IMR-90 (cell line): ENCODE measurements at regions of chr17 and their contacts with region 1.

Region 1: DNA sequence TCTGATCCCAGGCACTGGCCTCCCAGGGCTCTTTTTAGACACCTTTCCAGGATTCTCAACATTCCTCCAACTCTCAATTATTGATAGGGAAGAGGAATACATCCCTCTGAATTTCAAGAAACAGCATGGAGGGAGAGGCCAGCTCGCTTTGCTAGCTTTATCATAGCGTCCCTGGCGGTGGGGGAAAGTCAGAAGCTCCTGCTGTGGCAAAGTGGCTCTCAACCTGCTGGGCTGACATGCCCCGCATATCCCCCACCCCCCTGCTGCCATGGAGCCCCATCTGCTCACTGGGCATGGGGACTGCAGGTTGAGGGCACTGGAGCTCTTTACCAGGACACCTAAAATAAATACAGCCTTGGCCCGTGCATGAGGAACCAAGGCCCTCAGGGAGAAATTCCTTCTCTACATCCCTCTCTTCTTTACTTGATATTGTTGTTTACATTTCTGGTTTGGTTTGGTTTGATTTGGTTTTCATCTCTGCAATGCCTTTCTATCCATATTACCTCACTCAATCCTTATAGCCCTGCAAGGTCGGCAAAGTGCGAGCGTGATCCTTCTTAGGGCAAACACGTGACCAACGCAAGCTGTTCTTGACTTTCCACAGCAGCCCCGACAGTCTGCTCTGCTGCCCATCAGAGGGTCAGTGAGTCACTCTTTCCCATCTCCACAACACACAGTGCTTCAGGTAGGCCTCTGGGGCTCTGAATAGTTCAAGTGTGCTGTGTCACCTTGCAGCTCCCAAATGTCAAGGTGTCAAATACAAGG is 140.1 kb downstream of the SLC39A11 start:
- DNase-seq: no peak
- ATAC-seq: peak; percentile 17; the same call in 1 of the 2 replicates
- H3K4me3 ChIP-seq: no peak overlapping the region
- H3K27ac ChIP-seq: no peak overlapping the region
- H3K4me1 ChIP-seq: no peaks in the 10 kb centered on the region
- H3K27me3 ChIP-seq: no peaks in the 10 kb centered on the region
- CTCF ChIP-seq: no peak
- POLR2A ChIP-seq: no peak
- RAD21 ChIP-seq: no peak

Region 2: GRCh38 chr17:71398800-71399219 is 1553.6 kb before region 1 on chr17:
- CTCF ChIA-PET with region 1: no interaction called
- POLR2A ChIA-PET with region 1: no interaction called
- dilution Hi-C with region 1: no loop called
- in situ Hi-C with region 1: no loop called
- intact Hi-C with region 1: no loop called
- DNase-seq: no peak
- ATAC-seq: peak; percentile 17; the same call in 1 of the 2 replicates
- H3K4me3 ChIP-seq: no peak overlapping the region
- H3K27ac ChIP-seq: no peak overlapping the region
- H3K4me1 ChIP-seq: peaks cover 2% of the 10 kb centered on the region; the same call in 1 of the 2 replicates
- H3K27me3 ChIP-seq: no peaks in the 10 kb centered on the region
- CTCF ChIP-seq: no peak
- POLR2A ChIP-seq: no peak
- RAD21 ChIP-seq: no peak

Region 3: DNA sequence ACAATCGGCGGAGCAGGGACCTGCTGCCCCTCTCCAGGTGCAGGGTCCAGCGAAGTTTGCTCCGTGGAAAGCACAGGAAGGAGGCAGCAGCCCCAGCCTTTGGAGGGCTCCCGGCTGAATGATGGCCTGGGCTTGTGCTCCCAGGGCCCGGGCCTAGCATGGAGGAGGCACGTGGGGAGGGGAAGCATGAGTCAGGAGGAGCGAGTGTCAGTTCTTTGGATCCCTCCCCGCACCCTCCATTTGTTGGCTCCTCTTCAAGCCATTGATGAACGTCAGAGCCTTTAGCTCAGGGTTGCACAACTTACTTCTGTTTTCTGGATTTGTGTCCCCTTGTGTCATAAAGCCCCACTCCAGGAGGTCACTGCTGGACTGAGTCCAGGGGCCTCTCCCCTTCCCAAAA is 1286.8 kb after region 1 on chr17:
- CTCF ChIA-PET with region 1: no interaction called
- POLR2A ChIA-PET with region 1: no interaction called
- dilution Hi-C with region 1: no loop called
- in situ Hi-C with region 1: no loop called
- intact Hi-C with region 1: loop called (anchors 5 kb)
- DNase-seq: no peak
- ATAC-seq: no peak
- H3K4me3 ChIP-seq: no peak overlapping the region
- H3K27ac ChIP-seq: no peak overlapping the region
- H3K4me1 ChIP-seq: no peaks in the 10 kb centered on the region
- H3K27me3 ChIP-seq: no peaks in the 10 kb centered on the region
- CTCF ChIP-seq: no peak
- POLR2A ChIP-seq: no peak
- RAD21 ChIP-seq: no peak